HCT116 (cell line): ENCODE measurements at regions of chr12 and their contacts with region 1.

Region 1: DNA sequence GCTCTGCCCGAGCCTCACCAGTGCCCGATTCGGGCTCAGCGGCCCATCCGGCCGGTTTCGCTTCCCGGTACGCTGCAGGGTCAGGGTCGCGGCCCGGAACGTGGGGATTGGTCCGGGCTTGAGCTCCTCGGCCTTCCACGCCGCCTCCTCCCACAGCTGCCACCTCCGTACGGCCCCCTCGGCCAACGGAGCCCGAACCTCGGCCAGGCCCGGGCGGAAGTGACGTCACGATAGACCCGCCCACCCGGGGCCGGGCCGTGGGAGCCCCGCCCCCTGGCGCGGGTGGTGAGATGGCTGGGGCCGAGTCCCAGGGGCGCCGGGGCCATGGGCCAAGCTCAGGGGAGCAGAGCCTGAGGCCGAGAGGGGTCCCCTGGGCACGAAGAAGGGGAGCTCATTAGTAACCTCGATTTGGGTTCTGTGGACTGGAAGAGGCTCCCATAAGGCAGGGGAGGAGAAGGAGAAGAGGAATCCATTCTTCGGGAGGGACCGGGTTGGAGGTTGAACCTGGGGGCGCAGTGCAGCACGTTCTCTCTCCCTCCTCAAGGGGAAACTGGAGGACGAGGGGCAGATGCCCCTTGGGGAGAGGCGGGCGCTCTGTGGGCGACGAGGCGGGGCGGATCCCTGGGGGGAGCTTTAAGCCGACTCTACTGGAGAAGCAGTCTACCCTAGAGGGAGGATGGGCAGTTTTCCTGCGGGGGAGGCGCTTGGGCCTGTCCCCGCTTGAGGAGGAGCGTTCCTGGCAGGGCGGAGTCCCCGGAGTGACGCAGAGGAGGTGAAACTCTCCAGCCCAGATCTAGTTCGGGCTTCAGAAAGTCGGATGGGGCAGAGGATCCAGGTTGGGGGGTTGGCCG is at the start of gene MLF2:
- DNase-seq: peak; percentile 97
- ATAC-seq: peak; percentile 92
- H3K4me3 ChIP-seq: peak within 1 kb of the TSS; percentile 94 to 99
- H3K27ac ChIP-seq: peak within 1 kb of the TSS; percentile 92
- H3K4me1 ChIP-seq: peaks cover 14 to 32% of the 10 kb centered on the region in 2 experiments; a peak in 3 of 4 replicates
- H3K27me3 ChIP-seq: no peaks in the 10 kb centered on the region
- CTCF ChIP-seq: no peak; a peak in 4 of 6 replicates
- POLR2A ChIP-seq: peak; percentile 83
- RAD21 ChIP-seq: no peak; the same call in 1 of the 2 replicates
- total RNA-seq, gene MLF2: 309 TPM

Region 2: GRCh38 chr12:5685966-5686365 is 1067.2 kb before region 1 on chr12:
- CTCF ChIA-PET with region 1: no interaction called
- POLR2A ChIA-PET with region 1: no interaction called
- RAD21 ChIA-PET with region 1: no interaction called
- intact Hi-C with region 1: no loop called
- DNase-seq: no peak
- ATAC-seq: no peak
- H3K4me3 ChIP-seq: no peak overlapping the region
- H3K27ac ChIP-seq: no peak overlapping the region
- H3K4me1 ChIP-seq: no peaks in the 10 kb centered on the region
- H3K27me3 ChIP-seq: peaks cover 34% of the 10 kb centered on the region
- CTCF ChIP-seq: no peak
- POLR2A ChIP-seq: no peak
- RAD21 ChIP-seq: no peak

Region 3: GRCh38 chr12:6723607-6724396 is 29.3 kb before region 1 on chr12 and contains the start of gene COPS7A:
- CTCF ChIA-PET with region 1: interaction called, 16 read pairs
- POLR2A ChIA-PET with region 1: interaction called, 10 read pairs
- RAD21 ChIA-PET with region 1: interaction called in 1 of 2 experiments, 3 read pairs
- intact Hi-C with region 1: no loop called
- DNase-seq: peak; percentile 98
- ATAC-seq: peak; percentile 96
- H3K4me3 ChIP-seq: peak within 1 kb of the TSS; percentile 54 to 86
- H3K27ac ChIP-seq: peak within 1 kb of the TSS; percentile 91
- H3K4me1 ChIP-seq: peaks cover 5 to 26% of the 10 kb centered on the region in 2 experiments; a peak in 3 of 4 replicates
- H3K27me3 ChIP-seq: no peaks in the 10 kb centered on the region
- CTCF ChIP-seq: no peak
- POLR2A ChIP-seq: peak; percentile 29
- RAD21 ChIP-seq: no peak
- total RNA-seq, gene COPS7A: 67.8 TPM

Region 4: GRCh38 chr12:6771091-6771495 is 17.9 kb after region 1 on chr12:
- CTCF ChIA-PET with region 1: interaction called, 53 read pairs
- POLR2A ChIA-PET with region 1: interaction called, 41 read pairs
- RAD21 ChIA-PET with region 1: interaction called, 4 to 15 read pairs
- intact Hi-C with region 1: loop called (anchors 2 kb)
- DNase-seq: no peak
- ATAC-seq: no peak
- H3K4me3 ChIP-seq: no peak overlapping the region
- H3K27ac ChIP-seq: peak overlapping the region; percentile 40; the same call in 1 of the 2 replicates
- H3K4me1 ChIP-seq: peaks cover 18 to 40% of the 10 kb centered on the region in 2 experiments
- H3K27me3 ChIP-seq: no peaks in the 10 kb centered on the region
- CTCF ChIP-seq: no peak
- POLR2A ChIP-seq: no peak
- RAD21 ChIP-seq: no peak

Region 5: DNA sequence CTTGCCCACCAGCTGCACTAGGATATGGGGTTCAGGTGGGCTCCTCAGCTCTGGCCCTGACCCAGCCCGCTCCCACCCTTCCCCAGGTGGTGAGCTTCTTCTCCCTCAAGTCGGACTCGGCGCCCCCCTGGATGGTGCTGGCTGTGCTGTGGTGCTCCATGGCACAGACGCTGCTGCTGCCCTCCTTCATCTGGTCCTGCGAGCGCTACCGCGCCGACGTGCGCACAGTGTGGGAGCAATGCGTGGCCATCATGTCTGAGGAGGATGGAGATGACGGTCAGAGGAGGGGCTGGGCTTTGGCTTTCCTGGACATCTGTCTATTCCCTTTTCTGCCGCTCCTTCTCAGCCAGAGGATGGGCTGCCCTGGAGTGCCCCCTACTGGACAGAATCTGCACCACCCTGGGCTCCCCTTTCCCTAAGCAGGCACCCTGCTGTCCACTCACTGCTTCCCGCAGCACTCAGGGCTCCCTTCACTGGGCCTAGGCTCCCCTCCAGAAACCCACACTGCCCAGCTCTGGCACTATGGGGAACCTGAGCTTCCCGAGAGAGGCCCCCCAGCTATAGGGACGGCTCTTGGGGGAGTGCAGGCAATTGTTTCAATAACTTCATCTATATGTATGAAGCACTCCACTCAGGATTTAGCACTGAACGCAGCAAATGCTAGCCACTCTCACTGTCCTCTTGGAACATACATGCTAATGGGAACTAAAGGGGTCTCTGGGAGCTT is 72.4 kb after region 1 on chr12:
- CTCF ChIA-PET with region 1: interaction called, 11 read pairs
- POLR2A ChIA-PET with region 1: interaction called, 4 read pairs
- RAD21 ChIA-PET with region 1: no interaction called
- intact Hi-C with region 1: loop called (anchors 1 kb)
- DNase-seq: peak; percentile 47
- ATAC-seq: peak; percentile 46
- H3K4me3 ChIP-seq: no peak overlapping the region
- H3K27ac ChIP-seq: 0 out of 2 replicates have a peak overlapping the region, but pooled peaks have one; percentile 78
- H3K4me1 ChIP-seq: peaks cover 25 to 54% of the 10 kb centered on the region in 2 experiments
- H3K27me3 ChIP-seq: peaks cover 6% of the 10 kb centered on the region; the same call in 1 of the 2 replicates
- CTCF ChIP-seq: peak in 2 of 3 experiments; percentile 91 to 98; a peak in 4 of 6 replicates
- POLR2A ChIP-seq: no peak
- RAD21 ChIP-seq: no peak

Region 6: DNA sequence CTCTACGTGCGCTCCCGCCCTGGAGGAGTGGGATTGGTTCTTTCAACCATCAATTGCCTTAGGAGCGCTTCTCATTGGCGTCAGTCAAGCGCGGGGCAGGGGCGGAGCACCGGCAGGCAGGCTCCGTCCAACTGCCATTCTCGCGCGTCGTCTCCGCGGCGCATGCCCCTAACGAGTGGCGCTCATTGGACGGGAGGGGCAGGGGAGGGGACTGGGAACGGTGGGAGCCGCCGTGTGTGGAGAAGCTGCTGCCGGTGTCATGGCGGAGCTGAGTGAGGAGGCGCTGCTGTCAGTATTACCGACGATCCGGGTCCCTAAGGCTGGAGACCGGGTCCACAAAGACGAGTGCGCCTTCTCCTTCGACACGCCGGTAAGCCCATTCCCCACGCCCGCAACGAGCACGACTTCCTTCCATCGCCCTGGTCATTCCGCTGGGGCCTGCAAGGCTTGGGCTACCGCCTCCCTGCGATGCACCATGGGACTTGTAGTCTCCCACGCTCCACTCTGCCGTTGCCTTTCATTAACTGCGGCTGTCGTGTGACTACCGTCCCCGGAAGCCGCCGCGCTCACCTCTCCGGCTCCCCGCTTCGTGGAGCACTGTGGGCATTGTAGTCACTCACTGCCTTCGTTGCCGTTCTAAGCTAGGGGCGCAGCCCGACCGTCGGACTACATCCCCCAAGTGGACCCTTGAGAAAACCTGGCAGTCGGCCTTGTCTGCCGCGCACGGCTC is 98.9 kb after region 1 on chr12 and contains the start of gene USP5:
- CTCF ChIA-PET with region 1: interaction called, 19 read pairs
- POLR2A ChIA-PET with region 1: interaction called, 6 read pairs
- RAD21 ChIA-PET with region 1: no interaction called
- intact Hi-C with region 1: no loop called
- DNase-seq: peak; percentile 100
- ATAC-seq: peak; percentile 81
- H3K4me3 ChIP-seq: peak within 1 kb of the TSS; percentile 67 to 94
- H3K27ac ChIP-seq: peak within 1 kb of the TSS; percentile 77
- H3K4me1 ChIP-seq: peaks cover 15 to 31% of the 10 kb centered on the region in 2 experiments
- H3K27me3 ChIP-seq: no peaks in the 10 kb centered on the region
- CTCF ChIP-seq: no peak
- POLR2A ChIP-seq: no peak
- RAD21 ChIP-seq: no peak
- total RNA-seq, gene USP5: 175 TPM

Region 7: DNA sequence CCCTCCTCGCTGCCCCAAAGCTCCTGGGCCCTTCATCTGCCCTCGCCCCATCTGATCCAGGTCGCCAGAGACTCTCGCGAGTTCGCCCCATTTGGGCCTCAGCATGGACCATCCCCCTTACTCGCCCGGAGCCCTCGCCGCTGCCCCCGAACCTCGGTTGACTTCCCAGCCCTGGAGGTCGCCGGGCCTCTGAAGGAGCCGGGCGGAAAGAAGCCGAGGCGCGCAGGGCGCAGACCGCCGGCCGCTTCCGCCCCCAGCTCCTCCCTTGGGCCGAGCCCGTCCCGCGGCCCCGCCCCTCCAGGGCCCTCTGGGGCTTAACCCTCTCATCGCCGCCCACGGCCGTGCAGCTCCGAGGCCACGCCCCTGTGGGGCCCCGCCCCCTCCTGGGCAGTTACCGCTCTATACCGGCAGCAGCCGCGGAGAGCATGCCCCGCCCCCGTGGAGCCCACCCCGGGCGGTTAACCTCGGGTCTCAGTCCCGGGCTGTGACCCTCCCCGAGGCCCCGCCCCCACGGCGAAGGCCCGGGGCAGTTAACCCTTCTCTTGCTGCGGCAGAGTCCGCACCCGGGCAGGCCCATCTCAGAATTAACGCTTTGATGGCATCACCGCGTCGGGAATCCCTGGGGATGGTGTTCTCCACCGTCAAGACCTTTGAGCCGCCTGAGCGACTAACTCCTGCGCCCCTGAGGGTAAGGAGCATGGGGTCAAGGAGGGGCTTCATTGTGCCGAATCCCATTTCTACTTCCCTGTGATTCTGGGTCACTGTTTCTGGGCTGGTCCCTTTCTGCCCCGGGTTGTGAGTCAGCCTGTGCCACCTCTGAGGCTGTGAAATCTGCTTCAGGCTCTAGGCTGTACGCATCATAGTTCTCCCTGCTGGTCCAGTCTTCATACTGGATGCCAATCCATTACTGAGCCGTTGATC is 120.2 kb after region 1 on chr12 and contains the start of gene SPSB2:
- CTCF ChIA-PET with region 1: interaction called, 17 read pairs
- POLR2A ChIA-PET with region 1: interaction called, 22 read pairs
- RAD21 ChIA-PET with region 1: no interaction called
- intact Hi-C with region 1: no loop called
- DNase-seq: peak; percentile 89
- ATAC-seq: peak; percentile 79
- H3K4me3 ChIP-seq: peak within 1 kb of the TSS; percentile 73 to 92
- H3K27ac ChIP-seq: peak within 1 kb of the TSS; percentile 96
- H3K4me1 ChIP-seq: peaks cover 23 to 50% of the 10 kb centered on the region in 2 experiments
- H3K27me3 ChIP-seq: no peaks in the 10 kb centered on the region
- CTCF ChIP-seq: no peak
- POLR2A ChIP-seq: peak; percentile 35
- RAD21 ChIP-seq: no peak
- total RNA-seq, gene SPSB2: 10.0 TPM